ENCODE measurements at regions of chr2 and their contacts with region 1.

Region 1: GRCh38 chr2:10028988-10029874 is 14.1 kb upstream of the KLF11 start:
- DNase-seq: peak; percentile 81 to 87 (median 85)
- ATAC-seq: peak; percentile 74 to 95 (median 86)
- H3K4me3 ChIP-seq: peak overlapping the region in 7 of 12 donors; percentile 0 to 50 (median 9)
- H3K27ac ChIP-seq: peak overlapping the region; percentile 68 to 93 (median 80)
- H3K4me1 ChIP-seq: peaks cover 3 to 51% (median 27%) of the 10 kb centered on the region in 12 donors
- H3K27me3 ChIP-seq: no peaks in the 10 kb centered on the region
- CTCF ChIP-seq: peak in 4 of 12 donors; percentile 14 to 32 (median 24)
- POLR2A ChIP-seq: peak in 1 of 2 donors; percentile 30

Region 2: DNA sequence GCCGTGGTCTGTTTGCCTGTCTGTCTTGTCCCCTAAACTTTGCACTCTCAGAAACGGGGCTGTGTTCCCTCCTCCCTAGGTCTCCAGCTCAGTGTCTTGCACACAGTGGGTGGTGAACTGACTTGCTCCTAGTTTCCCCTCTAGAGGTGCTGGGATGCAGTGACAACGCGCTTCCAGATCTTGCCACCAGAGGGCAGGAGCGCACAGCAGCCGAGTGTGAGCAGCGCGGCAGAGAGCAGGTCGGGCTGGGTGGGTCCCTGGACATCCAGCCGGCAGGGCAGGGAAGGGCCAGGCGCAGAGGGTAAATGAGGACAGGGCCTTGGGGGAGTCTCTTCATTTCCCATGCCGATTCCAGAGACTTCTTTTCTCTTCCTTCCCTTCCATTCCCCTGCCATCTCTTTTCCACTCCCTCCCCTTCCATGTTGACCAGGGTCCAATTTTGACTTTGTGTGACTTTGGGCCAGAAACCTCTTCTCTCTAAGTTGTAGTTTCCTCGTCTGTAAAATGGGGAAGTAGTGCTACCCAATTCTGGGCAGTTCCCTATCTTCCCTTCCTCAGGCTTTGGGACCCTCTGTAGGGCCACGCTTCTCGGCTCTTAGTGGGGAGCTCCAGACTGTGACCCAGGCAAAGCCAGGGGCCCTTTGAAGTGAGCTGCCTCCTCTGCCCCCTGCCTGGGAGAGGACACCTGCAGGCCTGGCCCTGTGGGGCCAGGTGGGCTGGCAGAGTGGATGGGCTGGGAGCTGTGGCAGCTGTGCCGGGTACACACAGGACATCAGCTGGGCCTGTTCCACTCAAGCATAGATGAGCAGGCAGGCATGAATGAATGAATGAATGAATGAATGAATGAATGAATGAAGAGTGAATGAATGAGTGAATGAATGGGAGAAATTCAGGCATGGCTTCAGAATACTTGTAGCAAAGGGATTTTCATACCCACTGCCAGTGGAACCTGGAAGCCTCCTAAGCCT is 229.3 kb before region 1 on chr2:
- intact Hi-C with region 1: no loop called
- DNase-seq: peak; percentile 84 to 94 (median 88)
- ATAC-seq: peak; percentile 78 to 89 (median 80)
- H3K4me3 ChIP-seq: peak overlapping the region in 1 of 12 donors; percentile 12
- H3K27ac ChIP-seq: peak overlapping the region in 7 of 12 donors; percentile 18 to 67 (median 33)
- H3K4me1 ChIP-seq: peaks cover 0 to 52% (median 24%) of the 10 kb centered on the region in 12 donors
- H3K27me3 ChIP-seq: no peaks in the 10 kb centered on the region
- CTCF ChIP-seq: peak; percentile 92 to 99 (median 98)
- POLR2A ChIP-seq: no peak

Region 3: GRCh38 chr2:9984217-9984739 is 45.0 kb before region 1 on chr2:
- intact Hi-C with region 1: loop called in 2 of 10 experiments (anchors 5 kb)
- DNase-seq: no peak
- ATAC-seq: peak; percentile 47 to 65 (median 53)
- H3K4me3 ChIP-seq: no peak overlapping the region
- H3K27ac ChIP-seq: peak overlapping the region in 3 of 12 donors; percentile 37 to 74 (median 47)
- H3K4me1 ChIP-seq: peaks cover 0 to 38% (median 18%) of the 10 kb centered on the region in 12 donors
- H3K27me3 ChIP-seq: no peaks in the 10 kb centered on the region
- CTCF ChIP-seq: peak; percentile 72 to 96 (median 86)
- POLR2A ChIP-seq: no peak

Region 4: DNA sequence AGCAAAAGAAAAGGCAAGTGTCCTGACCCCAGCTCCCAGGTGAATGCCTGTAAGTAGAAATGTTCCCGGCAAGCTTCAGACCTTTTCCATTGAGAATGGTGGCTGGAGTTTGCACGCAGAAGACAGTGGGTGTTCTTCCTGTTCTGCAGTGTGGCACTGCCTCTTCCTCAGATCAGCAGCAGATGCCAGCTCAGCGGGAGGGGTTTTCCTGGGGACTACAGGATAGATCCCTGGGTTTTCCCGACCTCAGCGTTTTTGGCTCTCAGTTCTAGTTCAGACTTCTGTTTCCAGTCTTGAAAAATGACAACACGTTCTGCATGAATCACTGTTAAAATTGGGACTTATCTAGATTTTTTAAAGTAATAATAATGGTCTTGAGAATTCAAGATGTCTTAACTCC is 38.5 kb before region 1 on chr2:
- intact Hi-C with region 1: loop called in 3 of 10 experiments (anchors 5 kb)
- DNase-seq: peak in 4 of 5 donors; percentile 60 to 83 (median 70)
- ATAC-seq: peak in 3 of 4 donors; percentile 53 to 73 (median 67)
- H3K4me3 ChIP-seq: no peak overlapping the region
- H3K27ac ChIP-seq: peak overlapping the region in 1 of 12 donors; percentile 63
- H3K4me1 ChIP-seq: peaks cover 0 to 41% (median 15%) of the 10 kb centered on the region in 12 donors
- H3K27me3 ChIP-seq: no peaks in the 10 kb centered on the region
- CTCF ChIP-seq: no peak
- POLR2A ChIP-seq: no peak

Region 5: DNA sequence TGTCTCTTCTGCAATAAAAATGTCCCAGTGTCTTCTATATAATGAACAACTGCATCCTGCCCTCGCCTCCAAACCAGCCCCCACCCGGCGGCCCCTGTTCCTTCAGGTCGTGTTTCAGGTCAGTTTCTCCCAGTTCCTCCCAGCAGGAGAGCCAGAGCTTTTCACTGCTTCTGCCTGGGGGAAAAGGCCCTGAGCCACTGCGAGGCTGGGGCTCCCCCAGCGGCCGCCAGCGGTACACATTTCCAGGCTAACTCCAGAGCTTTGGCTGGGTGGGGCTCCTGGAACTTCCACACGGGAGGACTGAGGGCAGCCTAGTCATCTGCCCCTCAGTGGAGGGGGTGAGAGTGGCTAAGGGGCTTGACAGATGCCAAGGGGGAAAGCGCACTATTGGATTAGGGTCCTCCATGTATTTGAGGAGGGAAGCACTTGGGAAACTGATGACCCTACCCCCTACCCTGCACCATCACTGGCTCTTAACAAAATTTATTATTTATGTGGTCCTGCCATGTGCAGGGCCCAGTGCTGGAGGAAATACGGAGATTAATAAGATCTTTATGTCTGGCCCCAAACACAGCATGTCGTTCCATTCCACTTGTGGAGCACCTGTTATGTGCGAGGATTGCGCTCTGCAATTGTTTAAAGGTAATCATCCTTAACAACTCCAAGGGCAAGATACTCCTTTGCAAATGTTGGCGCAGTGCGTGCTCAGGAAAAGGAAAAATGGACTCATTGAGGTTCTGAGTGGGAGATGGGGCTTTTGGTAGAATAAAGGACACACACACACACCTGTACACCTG is 68.3 kb after region 1 on chr2:
- intact Hi-C with region 1: no loop called
- DNase-seq: peak; percentile 61 to 86 (median 68)
- ATAC-seq: peak; percentile 79 to 97 (median 93)
- H3K4me3 ChIP-seq: no peak overlapping the region
- H3K27ac ChIP-seq: no peak overlapping the region
- H3K4me1 ChIP-seq: peaks cover 0 to 15% (median 2%) of the 10 kb centered on the region in 12 donors
- H3K27me3 ChIP-seq: peaks cover 0 to 19% (median 5%) of the 10 kb centered on the region in 9 donors
- CTCF ChIP-seq: peak; percentile 71 to 96 (median 90)
- POLR2A ChIP-seq: no peak

Measured in heart left ventricle (tissue), 16 donors.